ENCODE measurements at regions of chr5 and their contacts with region 1.

Region 1: DNA sequence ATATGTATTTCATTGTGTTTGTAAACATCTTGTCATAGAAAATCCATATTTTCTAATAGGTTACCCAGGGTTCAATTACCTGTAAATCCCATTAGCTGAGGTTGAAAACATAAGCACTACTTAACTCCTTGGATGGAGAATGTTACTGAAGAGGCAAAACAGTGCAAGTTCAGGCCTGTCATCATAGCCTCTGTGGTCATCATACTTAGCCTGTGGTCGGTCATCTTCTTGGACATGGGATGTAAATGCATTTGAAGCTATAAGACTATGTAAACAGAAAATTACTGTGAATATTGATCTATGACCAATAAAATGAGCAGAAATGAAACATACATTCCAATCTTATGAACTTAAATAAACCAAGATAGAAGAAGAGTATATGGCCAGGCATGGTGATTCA is 164.7 kb downstream of the CHSY3 start:
- DNase-seq: no peak
- H3K4me3 ChIP-seq: no peak overlapping the region
- H3K27ac ChIP-seq: no peak overlapping the region
- H3K4me1 ChIP-seq: no peaks in the 10 kb centered on the region
- H3K27me3 ChIP-seq: no peaks in the 10 kb centered on the region
- CTCF ChIP-seq: no peak
- POLR2A ChIP-seq: no peak

Region 2: DNA sequence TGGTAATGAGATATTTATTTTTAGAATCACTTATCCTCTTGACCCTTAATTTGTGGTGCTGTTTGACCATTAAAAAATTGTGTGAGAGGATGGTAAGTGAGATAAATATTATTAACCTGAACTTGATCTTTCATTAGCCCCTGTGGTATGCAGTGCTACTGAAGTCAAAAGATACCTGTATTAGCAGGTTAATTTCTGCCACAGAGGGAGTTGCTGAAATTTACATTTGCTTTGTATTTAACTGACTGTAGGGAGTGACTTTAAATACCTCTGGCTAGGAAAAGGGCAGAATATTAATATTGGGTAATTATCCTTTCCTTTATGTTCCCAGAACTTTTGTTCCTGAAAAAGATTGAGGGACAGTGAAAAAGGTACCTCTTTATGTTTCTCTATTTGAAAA is 31.1 kb before region 1 on chr5:
- intact Hi-C with region 1: loop called (anchors 2 kb)
- DNase-seq: no peak
- H3K4me3 ChIP-seq: no peak overlapping the region
- H3K27ac ChIP-seq: no peak overlapping the region
- H3K4me1 ChIP-seq: no peaks in the 10 kb centered on the region
- H3K27me3 ChIP-seq: no peaks in the 10 kb centered on the region
- CTCF ChIP-seq: no peak
- POLR2A ChIP-seq: no peak

Region 3: DNA sequence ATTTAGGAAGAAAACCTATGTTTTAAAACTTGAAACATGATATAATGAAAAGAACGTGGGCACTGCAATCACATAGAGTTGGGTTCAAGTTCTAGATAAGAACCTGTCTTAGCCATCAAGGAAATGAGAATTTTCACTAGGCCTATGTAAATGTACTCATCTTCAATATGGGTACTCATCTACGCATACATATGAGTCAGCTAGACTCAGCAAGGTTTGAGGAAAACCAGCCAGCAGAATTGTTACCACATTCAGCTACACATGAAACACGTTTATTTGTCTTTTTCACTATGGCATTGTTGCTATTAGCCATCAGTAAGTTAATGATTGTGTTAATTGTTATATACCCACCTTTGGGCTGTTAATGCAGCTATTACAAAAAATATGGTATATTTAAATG is 18.4 kb before region 1 on chr5:
- intact Hi-C with region 1: no loop called
- DNase-seq: no peak
- H3K4me3 ChIP-seq: no peak overlapping the region
- H3K27ac ChIP-seq: no peak overlapping the region
- H3K4me1 ChIP-seq: no peaks in the 10 kb centered on the region
- H3K27me3 ChIP-seq: no peaks in the 10 kb centered on the region
- CTCF ChIP-seq: no peak
- POLR2A ChIP-seq: no peak

Measured in breast epithelium (tissue), 4 donors.